ENCODE measurements at regions of chr10 and their contacts with region 1.

Region 1: DNA sequence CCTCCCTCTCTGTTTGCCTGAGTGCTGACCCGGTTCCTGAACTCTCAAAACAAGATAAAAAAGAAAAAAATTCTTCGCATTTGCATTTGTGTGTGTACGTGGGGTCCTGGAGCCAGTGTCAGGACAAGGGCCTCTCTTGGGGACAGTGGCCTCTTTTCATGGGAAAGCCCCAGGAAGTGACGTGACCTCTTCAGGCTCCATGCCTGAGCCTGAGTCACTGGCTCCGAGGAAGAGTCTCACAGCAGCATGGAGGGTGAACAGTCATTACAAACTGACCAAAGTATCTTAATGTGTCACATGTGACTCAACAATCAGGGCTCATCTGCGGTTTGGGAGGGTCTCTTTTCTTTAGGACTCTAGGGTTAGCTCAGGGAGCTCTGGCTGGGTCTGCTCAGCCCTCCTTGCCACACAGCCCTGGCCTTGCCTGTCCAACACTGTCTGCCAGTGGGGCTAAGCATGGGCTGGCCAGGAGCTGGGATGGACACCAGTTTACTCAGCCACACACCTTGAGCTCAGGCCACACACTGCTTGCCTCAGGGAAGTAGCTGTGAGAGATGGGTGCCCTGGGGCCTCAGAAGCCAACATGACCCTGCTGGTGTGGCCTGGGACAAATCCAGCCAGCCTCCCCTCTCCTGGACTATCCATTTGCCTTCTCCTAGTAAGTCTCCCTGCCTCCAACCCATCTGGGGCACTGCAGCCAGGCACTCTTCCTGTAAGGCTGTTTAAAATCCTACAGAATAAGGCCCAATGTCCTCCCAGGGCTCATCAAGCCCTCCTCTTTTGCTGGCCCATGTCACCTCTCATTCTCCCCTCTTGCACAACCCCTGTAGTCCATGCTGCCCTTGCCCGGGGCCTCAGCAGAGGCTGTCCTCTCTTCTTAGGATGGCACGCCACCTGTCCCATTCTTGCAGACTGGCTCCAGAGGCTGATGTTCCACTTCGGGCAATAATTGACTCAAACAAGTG is 10.5 kb downstream of the TMEM273 start:
- DNase-seq: no peak
- ATAC-seq: peak; percentile 78
- H3K4me3 Mint-ChIP-seq: peak overlapping the region; percentile 69
- H3K27ac Mint-ChIP-seq: peak overlapping the region; percentile 95
- H3K4me1 Mint-ChIP-seq: peaks cover 94% of the 10 kb centered on the region
- H3K27me3 Mint-ChIP-seq: no peaks in the 10 kb centered on the region
- CTCF ChIP-seq: no peak

Region 2: DNA sequence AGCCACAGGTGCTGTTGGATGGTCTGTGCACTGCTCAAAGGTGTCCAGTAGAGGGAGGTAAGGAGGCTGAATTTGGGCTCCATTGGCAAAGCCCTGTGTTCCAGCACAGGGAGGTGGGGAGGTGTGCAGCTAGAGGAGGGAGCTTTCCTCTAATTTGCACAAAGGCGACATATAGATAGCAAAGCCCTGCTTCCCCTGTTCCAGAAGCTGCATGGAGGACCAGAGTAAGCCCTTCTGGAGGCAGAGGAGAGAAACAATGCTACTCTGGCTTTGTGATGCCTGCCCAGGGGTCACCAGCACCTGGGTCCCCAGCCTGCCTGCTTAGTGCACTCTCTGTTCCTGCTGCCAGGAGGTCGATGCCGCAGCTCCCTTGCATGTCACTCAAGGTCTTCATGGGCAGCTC is 569.4 kb before region 1 on chr10:
- CTCF ChIA-PET with region 1: no interaction called
- POLR2A ChIA-PET with region 1: no interaction called
- intact Hi-C with region 1: no loop called
- DNase-seq: no peak
- ATAC-seq: peak; percentile 89
- H3K4me3 Mint-ChIP-seq: no peak overlapping the region
- H3K27ac Mint-ChIP-seq: no peak overlapping the region
- H3K4me1 Mint-ChIP-seq: peaks cover 41% of the 10 kb centered on the region
- H3K27me3 Mint-ChIP-seq: peaks cover 6% of the 10 kb centered on the region
- CTCF ChIP-seq: no peak

Region 3: DNA sequence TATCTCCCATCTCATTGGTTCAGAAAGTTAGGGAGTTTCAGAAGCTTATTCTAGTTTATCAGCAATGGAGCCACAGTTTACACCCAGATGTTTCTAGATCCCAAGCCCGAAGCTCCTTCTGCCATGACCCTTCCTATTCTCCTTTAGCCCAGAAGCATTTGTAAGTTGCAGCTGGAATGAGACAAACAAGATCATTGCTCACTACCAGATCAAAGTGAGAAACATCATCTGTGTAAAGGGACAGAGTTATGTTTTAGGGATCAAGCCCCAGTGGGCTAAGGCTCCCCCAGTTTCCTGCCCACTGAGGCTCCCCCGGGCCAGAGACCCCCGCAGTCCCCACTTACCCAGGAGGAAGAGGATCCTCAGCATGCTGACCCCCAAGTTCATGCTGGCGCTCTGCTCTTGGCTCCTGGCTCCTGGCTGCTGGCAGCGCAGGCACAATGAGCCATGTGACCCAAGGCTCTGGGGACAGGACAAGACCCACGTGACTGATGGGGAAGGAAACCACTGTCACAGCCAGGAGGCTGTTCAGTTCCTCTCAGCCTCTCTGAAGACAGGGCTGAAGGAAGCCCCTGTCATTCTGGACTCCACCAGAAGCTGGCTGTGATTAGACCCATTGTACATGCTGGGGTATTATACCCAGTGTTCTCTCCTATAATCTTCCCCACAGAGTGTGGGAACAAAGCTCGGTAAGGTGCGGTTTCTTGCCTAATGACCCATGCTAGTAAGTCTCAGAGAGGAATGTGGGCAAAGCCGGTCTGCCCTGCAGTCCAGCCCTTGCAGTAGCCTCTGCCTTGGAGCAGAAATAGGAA is 10.5 kb after region 1 on chr10 and contains the start of gene TMEM273:
- CTCF ChIA-PET with region 1: no interaction called
- POLR2A ChIA-PET with region 1: interaction called, 20 read pairs
- intact Hi-C with region 1: loop called (anchors 1 kb)
- DNase-seq: no peak
- ATAC-seq: peak; percentile 75
- H3K4me3 Mint-ChIP-seq: peak within 1 kb of the TSS; percentile 82
- H3K27ac Mint-ChIP-seq: peak within 1 kb of the TSS; percentile 93
- H3K4me1 Mint-ChIP-seq: peaks cover 81% of the 10 kb centered on the region
- H3K27me3 Mint-ChIP-seq: no peaks in the 10 kb centered on the region
- CTCF ChIP-seq: no peak
- total RNA-seq, gene TMEM273: 6.7 and 8.5 TPM in 2 replicates

Region 4: GRCh38 chr10:49362596-49363260 is 185.1 kb after region 1 on chr10:
- CTCF ChIA-PET with region 1: no interaction called
- POLR2A ChIA-PET with region 1: no interaction called
- intact Hi-C with region 1: loop called (anchors 5 kb)
- DNase-seq: no peak
- ATAC-seq: peak; percentile 84
- H3K4me3 Mint-ChIP-seq: peak overlapping the region; percentile 54
- H3K27ac Mint-ChIP-seq: peak overlapping the region; percentile 71
- H3K4me1 Mint-ChIP-seq: peaks cover 12% of the 10 kb centered on the region
- H3K27me3 Mint-ChIP-seq: peaks cover 3% of the 10 kb centered on the region
- CTCF ChIP-seq: no peak

Region 5: GRCh38 chr10:49398000-49398861 is 220.6 kb after region 1 on chr10:
- CTCF ChIA-PET with region 1: no interaction called
- POLR2A ChIA-PET with region 1: no interaction called
- intact Hi-C with region 1: no loop called
- DNase-seq: peak; percentile 41
- ATAC-seq: peak; percentile 58
- H3K4me3 Mint-ChIP-seq: peak overlapping the region; percentile 41
- H3K27ac Mint-ChIP-seq: no peak overlapping the region
- H3K4me1 Mint-ChIP-seq: peaks cover 13% of the 10 kb centered on the region
- H3K27me3 Mint-ChIP-seq: peaks cover 52% of the 10 kb centered on the region
- CTCF ChIP-seq: no peak

Region 6: GRCh38 chr10:49831352-49832040 is 653.8 kb after region 1 on chr10:
- CTCF ChIA-PET with region 1: no interaction called
- POLR2A ChIA-PET with region 1: no interaction called
- intact Hi-C with region 1: no loop called
- DNase-seq: no peak
- ATAC-seq: no peak
- H3K4me3 Mint-ChIP-seq: no peak overlapping the region
- H3K27ac Mint-ChIP-seq: no peak overlapping the region
- H3K4me1 Mint-ChIP-seq: peaks cover 7% of the 10 kb centered on the region
- H3K27me3 Mint-ChIP-seq: no peaks in the 10 kb centered on the region
- CTCF ChIP-seq: no peak

Measured in activated B cell treated with CpG ODN at 0.5 μM for 24 hours (primary cell).